ENCODE measurements at regions of chr6 and their contacts with region 1.

Region 1: DNA sequence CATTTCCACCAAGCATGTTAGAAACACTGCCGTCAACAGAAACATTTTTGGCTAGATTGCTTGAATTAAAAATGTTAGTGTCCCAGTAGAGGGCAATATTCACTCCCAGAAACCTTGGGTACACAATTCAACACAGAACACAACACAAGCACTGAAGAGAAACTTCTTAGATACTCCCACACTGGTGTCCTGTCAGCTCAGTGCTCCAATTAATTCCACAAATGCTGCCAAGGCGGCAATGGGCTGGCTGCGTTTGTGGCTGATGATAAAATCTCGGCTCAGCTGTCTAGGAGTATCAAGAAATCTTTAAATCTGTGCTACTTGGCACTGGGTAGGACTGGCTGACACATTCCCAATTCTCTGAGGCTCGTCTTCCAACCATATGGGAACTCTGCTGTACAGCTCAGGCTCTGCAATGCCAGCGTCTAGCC is 39.3 kb downstream of the BEND3 start:
- DNase-seq: peak; percentile 9
- H3K4me3 ChIP-seq: no peak overlapping the region
- H3K27ac ChIP-seq: no peak overlapping the region
- H3K4me1 ChIP-seq: no peaks in the 10 kb centered on the region
- H3K27me3 ChIP-seq: no peaks in the 10 kb centered on the region
- CTCF ChIP-seq: peak; percentile 5 to 36

Region 2: DNA sequence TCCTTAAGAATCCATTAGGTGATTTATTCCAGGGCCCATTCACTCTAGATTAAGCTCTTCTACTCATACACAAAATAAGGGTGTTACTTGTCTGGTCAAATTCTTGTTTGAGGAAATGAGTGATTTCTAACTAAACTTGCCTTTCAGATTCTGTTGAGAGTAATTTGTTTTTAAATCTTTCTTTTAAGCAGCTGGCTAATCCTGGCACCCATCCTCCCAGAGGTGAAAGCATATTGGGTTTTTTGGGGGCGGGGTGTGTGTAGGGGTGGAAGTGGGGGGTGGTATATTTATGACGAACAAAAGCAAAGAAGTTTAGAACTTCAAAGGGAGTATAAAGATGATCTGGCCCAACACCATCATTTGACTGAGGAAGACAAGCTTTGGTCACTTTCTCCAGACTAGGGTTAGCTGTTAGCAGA is 541.4 kb before region 1 on chr6:
- CTCF ChIA-PET with region 1: no interaction called
- dilution Hi-C with region 1: no loop called
- in situ Hi-C with region 1: no loop called
- intact Hi-C with region 1: no loop called
- DNase-seq: no peak
- H3K4me3 ChIP-seq: no peak overlapping the region
- H3K27ac ChIP-seq: peak overlapping the region; percentile 25
- H3K4me1 ChIP-seq: peaks cover 40% of the 10 kb centered on the region
- H3K27me3 ChIP-seq: no peaks in the 10 kb centered on the region
- CTCF ChIP-seq: no peak

Region 3: GRCh38 chr6:106637717-106638341 is 438.1 kb before region 1 on chr6:
- CTCF ChIA-PET with region 1: no interaction called
- dilution Hi-C with region 1: no loop called
- in situ Hi-C with region 1: no loop called
- intact Hi-C with region 1: no loop called
- DNase-seq: no peak
- H3K4me3 ChIP-seq: no peak overlapping the region
- H3K27ac ChIP-seq: no peak overlapping the region
- H3K4me1 ChIP-seq: no peaks in the 10 kb centered on the region
- H3K27me3 ChIP-seq: no peaks in the 10 kb centered on the region
- CTCF ChIP-seq: no peak

Region 4: DNA sequence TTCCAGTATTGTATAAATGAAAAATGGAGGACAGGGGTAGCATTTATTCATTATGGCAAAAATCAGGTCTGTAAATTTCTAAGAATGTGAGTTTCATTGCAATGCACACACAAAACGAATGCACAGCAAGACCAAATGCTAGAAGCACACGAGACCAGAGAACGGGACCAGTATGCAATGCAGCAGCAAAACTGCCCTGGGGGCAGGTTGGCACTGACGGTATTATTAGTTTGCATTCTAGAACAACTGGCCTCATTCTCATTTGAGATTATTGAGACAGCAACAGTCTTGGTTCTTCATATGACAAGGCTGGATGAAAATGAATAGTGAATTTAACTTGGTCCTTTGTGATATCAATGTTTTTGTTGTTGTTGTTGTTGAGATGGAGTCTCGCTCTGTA is 56.9 kb before region 1 on chr6:
- CTCF ChIA-PET with region 1: no interaction called
- dilution Hi-C with region 1: loop called (anchors 5 kb)
- in situ Hi-C with region 1: no loop called
- intact Hi-C with region 1: no loop called
- DNase-seq: no peak
- H3K4me3 ChIP-seq: no peak overlapping the region
- H3K27ac ChIP-seq: no peak overlapping the region
- H3K4me1 ChIP-seq: peaks cover 10% of the 10 kb centered on the region
- H3K27me3 ChIP-seq: no peaks in the 10 kb centered on the region
- CTCF ChIP-seq: no peak

Region 5: DNA sequence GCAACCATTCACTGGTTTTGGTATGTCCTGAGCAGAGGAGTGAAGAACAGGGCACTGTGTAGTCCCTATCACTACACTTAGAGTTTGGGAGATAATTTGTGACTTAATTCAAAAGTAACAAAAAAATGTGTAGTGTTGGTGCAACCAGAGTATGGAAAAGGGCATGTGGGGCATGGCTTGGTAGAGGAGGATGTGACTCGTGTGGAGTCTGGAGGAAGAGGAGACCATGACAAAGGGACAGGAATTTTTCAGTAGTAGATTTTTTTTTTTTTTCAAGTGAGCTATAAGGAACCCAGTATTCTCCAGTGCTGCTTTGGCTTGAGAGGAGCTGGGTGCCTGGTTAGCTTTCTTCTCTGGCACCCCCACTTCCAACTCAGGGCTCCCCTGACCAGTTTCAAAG is 42.8 kb before region 1 on chr6:
- CTCF ChIA-PET with region 1: no interaction called
- dilution Hi-C with region 1: no loop called
- in situ Hi-C with region 1: no loop called
- intact Hi-C with region 1: loop called (anchors 1 kb)
- DNase-seq: no peak
- H3K4me3 ChIP-seq: no peak overlapping the region
- H3K27ac ChIP-seq: no peak overlapping the region
- H3K4me1 ChIP-seq: peaks cover 23% of the 10 kb centered on the region
- H3K27me3 ChIP-seq: no peaks in the 10 kb centered on the region
- CTCF ChIP-seq: no peak

Region 6: DNA sequence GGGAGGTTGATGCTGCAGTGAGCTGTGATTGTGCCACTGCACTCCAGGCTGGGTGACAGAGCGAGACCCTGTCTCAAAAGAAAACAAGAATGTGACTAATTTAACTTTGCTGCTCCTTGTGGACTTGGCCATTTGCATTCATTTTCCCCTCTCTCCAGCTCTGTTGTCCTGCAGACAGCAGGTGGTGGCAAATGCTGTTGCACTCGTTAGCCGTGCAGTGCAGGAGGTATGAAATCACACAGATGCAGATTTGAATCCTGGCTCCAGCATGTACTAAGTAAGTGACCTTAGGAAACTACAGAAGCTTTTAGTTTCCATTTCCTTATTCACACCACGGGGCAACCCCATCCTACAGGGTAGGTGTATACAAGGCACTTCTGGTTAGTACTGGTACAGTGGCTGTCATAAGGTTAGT is 49.0 kb after region 1 on chr6:
- CTCF ChIA-PET with region 1: no interaction called
- dilution Hi-C with region 1: loop called (anchors 5 kb)
- in situ Hi-C with region 1: no loop called
- intact Hi-C with region 1: no loop called
- DNase-seq: no peak
- H3K4me3 ChIP-seq: no peak overlapping the region
- H3K27ac ChIP-seq: no peak overlapping the region
- H3K4me1 ChIP-seq: no peaks in the 10 kb centered on the region
- H3K27me3 ChIP-seq: no peaks in the 10 kb centered on the region
- CTCF ChIP-seq: no peak

Region 7: GRCh38 chr6:107173779-107174178 is 97.8 kb after region 1 on chr6:
- CTCF ChIA-PET with region 1: no interaction called
- dilution Hi-C with region 1: no loop called
- in situ Hi-C with region 1: no loop called
- intact Hi-C with region 1: no loop called
- DNase-seq: peak; percentile 20
- H3K4me3 ChIP-seq: no peak overlapping the region
- H3K27ac ChIP-seq: no peak overlapping the region
- H3K4me1 ChIP-seq: no peaks in the 10 kb centered on the region
- H3K27me3 ChIP-seq: no peaks in the 10 kb centered on the region
- CTCF ChIP-seq: no peak

Region 8: DNA sequence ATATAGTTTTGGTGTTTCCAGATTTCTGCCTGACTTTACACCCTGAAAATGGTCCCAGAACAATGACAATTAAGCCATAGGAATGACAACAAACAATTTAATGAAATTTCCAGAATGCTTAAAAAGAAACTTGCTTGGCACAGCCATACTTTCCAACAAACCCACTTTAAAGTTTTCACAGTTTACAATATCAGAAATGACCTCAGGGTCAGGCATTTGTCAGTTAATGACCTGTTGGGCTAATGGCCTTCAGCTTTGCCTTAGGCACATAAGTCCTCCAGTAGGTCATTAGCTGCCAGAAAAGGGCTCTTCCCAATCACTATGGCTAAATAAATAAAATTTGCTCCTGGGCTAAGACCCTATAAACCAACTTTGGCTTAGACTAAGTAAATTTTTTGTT is 184.0 kb after region 1 on chr6:
- CTCF ChIA-PET with region 1: no interaction called
- dilution Hi-C with region 1: no loop called
- in situ Hi-C with region 1: no loop called
- intact Hi-C with region 1: no loop called
- DNase-seq: no peak
- H3K4me3 ChIP-seq: no peak overlapping the region
- H3K27ac ChIP-seq: no peak overlapping the region
- H3K4me1 ChIP-seq: peaks cover 4% of the 10 kb centered on the region
- H3K27me3 ChIP-seq: no peaks in the 10 kb centered on the region
- CTCF ChIP-seq: no peak

Measured in mammary epithelial cell (primary cell).